ENCODE measurements at regions of chr17 and their contacts with region 1.

Region 1: DNA sequence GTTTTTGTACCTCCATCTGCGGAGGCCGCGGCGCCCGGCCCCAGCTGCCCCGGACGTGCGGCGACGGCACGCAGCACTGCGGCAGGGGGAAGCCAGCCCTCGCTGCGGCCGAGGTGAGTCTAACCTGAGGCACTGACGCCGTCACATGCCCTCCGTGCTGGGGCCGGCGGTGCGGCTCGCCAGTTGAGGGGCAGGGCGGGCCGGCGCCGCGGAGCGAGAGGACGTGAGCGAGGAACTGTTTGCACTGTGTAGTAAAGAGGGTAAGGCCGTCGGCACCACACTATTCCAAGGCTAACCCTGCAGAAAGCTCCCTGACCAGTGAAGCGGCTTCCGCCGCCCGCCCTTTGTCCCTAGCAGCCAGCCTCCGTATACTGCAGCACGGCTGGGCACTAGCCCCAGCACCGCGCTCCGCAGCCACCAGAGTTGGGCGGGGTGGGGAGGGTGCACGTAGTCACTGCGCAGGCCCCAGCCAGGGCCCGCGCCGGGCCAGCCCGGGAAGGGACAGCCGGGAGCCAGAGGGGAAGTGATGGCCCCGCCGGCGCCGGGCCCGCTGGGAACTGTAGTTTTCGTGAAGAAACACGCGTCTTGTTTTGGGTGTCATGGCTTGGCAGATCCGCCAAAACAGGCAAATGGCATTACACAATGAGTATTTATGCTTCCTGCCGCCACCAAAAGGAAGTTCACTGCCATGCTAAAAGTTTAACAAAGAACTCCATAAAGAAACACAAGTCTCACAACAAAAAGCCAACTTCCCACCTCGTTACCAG is 580 bp upstream of the KANSL1 start:
- DNase-seq: peak; percentile 89
- ATAC-seq: peak; percentile 69
- H3K4me3 Mint-ChIP-seq: peak overlapping the region; percentile 84
- H3K27ac Mint-ChIP-seq: peak overlapping the region; percentile 97
- H3K4me1 Mint-ChIP-seq: peaks cover 51% of the 10 kb centered on the region
- H3K27me3 Mint-ChIP-seq: no peaks in the 10 kb centered on the region
- CTCF ChIP-seq: no peak

Region 2: GRCh38 chr17:46002311-46002972 is 191.4 kb before region 1 on chr17:
- CTCF ChIA-PET with region 1: interaction called, 6 read pairs
- POLR2A ChIA-PET with region 1: no interaction called
- intact Hi-C with region 1: loop called (anchors 5 kb)
- DNase-seq: peak; percentile 60
- ATAC-seq: peak; percentile 95
- H3K4me3 Mint-ChIP-seq: no peak overlapping the region
- H3K27ac Mint-ChIP-seq: no peak overlapping the region
- H3K4me1 Mint-ChIP-seq: peaks cover 2% of the 10 kb centered on the region
- H3K27me3 Mint-ChIP-seq: no peaks in the 10 kb centered on the region
- CTCF ChIP-seq: peak; percentile 74

Region 3: GRCh38 chr17:46061435-46061834 is 132.4 kb before region 1 on chr17:
- CTCF ChIA-PET with region 1: no interaction called
- POLR2A ChIA-PET with region 1: no interaction called
- intact Hi-C with region 1: loop called (anchors 5 kb)
- DNase-seq: no peak
- ATAC-seq: no peak
- H3K4me3 Mint-ChIP-seq: no peak overlapping the region
- H3K27ac Mint-ChIP-seq: no peak overlapping the region
- H3K4me1 Mint-ChIP-seq: no peaks in the 10 kb centered on the region
- H3K27me3 Mint-ChIP-seq: no peaks in the 10 kb centered on the region
- CTCF ChIP-seq: no peak

Region 4: GRCh38 chr17:46139432-46140210 is 54.2 kb before region 1 on chr17:
- CTCF ChIA-PET with region 1: interaction called, 10 read pairs
- POLR2A ChIA-PET with region 1: interaction called, 8 read pairs
- intact Hi-C with region 1: loop called (anchors 1 kb)
- DNase-seq: no peak
- ATAC-seq: peak; percentile 47
- H3K4me3 Mint-ChIP-seq: peak overlapping the region; percentile 7
- H3K27ac Mint-ChIP-seq: peak overlapping the region; percentile 47
- H3K4me1 Mint-ChIP-seq: peaks cover 93% of the 10 kb centered on the region
- H3K27me3 Mint-ChIP-seq: no peaks in the 10 kb centered on the region
- CTCF ChIP-seq: no peak

Region 5: DNA sequence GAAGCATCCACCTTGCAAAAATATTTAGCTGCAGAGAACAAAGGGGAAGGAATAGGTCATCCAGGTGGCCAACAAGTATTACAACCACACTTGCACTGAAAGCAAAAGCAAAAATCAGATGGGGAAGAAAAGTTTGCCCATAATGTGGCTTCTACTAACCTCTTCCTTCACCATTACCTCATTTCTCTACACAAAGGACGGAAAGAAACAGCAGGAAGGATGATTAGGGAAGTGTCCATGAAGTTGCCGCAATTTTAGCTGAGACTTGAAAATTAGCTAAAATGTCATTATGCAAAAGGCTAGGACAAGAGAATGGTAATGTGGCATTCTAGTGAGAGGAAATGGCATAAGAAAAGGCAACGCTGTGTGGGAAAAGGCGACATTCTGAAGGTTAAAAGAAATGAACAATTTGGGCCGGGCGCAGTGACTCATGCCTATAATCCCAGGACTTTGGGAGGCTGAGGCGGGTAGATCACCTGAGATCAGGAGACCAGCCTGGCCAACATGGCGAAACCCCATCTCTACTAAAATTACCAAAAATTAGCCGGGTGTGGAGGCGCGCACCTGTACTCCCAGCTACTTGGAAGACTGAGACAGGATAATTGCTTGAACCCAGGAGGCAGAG is 14.3 kb before region 1 on chr17:
- CTCF ChIA-PET with region 1: interaction called, 10 read pairs
- POLR2A ChIA-PET with region 1: interaction called, 12 read pairs
- intact Hi-C with region 1: loop called (anchors 1 kb)
- DNase-seq: no peak
- ATAC-seq: peak; percentile 53
- H3K4me3 Mint-ChIP-seq: peak overlapping the region; percentile 61
- H3K27ac Mint-ChIP-seq: peak overlapping the region; percentile 66
- H3K4me1 Mint-ChIP-seq: peaks cover 87% of the 10 kb centered on the region
- H3K27me3 Mint-ChIP-seq: no peaks in the 10 kb centered on the region
- CTCF ChIP-seq: no peak

Region 6: DNA sequence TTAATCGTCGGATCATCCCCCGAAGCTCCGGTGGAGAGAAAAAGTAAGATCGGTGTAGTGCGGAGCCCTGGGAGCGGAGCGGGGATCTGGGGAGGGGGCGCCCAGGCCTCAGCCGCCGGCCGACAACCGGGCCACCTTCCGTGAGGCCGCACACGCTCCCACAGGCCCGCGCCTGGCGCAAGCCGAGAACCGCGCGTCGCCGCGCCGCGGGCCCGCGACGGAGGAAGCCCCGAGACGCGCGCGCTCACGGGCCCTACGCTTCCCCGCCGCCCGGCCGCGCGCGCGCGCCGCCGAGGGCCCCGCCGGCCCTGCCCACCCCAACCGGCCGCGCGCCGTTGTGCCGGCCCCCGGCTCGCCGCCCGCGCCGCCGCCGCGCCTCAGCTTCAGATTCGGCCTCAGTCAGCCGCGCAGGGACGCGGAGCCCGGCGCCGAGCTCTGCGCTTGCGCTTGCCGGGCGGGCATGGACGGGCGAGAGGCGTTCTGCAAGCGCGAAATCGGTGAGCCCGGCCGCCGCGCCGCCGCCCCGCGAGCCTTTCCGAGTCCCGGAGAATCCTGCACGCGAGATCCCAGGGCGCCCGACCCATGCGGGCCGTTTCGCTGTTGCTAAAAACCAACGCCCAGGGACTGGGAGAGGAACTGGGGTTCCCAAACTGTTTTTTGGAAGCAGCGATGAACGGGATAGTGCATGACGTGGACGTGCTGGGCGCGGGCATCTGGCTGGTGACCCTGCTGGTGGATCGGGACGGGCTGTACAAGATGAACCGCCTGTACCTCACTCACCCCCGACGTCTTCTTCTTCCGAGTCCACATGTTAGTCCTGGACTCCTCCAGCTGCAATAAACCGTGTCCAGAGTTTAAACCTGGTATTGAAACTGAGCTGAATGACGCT is 73.1 kb after region 1 on chr17:
- CTCF ChIA-PET with region 1: interaction called, 3 read pairs
- POLR2A ChIA-PET with region 1: interaction called, 7 read pairs
- intact Hi-C with region 1: loop called (anchors 2 kb)
- DNase-seq: peak; percentile 79
- ATAC-seq: peak; percentile 88
- H3K4me3 Mint-ChIP-seq: peak overlapping the region; percentile 94
- H3K27ac Mint-ChIP-seq: peak overlapping the region; percentile 90
- H3K4me1 Mint-ChIP-seq: peaks cover 20% of the 10 kb centered on the region
- H3K27me3 Mint-ChIP-seq: peaks cover 7% of the 10 kb centered on the region
- CTCF ChIP-seq: no peak

Region 7: GRCh38 chr17:48107168-48108132 is 1913.6 kb after region 1 on chr17 and contains the start of gene SNX11:
- CTCF ChIA-PET with region 1: no interaction called
- POLR2A ChIA-PET with region 1: no interaction called
- intact Hi-C with region 1: loop called (anchors 5 kb)
- DNase-seq: peak; percentile 89
- ATAC-seq: peak; percentile 71
- H3K4me3 Mint-ChIP-seq: peak within 1 kb of the TSS; percentile 99
- H3K27ac Mint-ChIP-seq: peak within 1 kb of the TSS; percentile 97
- H3K4me1 Mint-ChIP-seq: peaks cover 69% of the 10 kb centered on the region
- H3K27me3 Mint-ChIP-seq: no peaks in the 10 kb centered on the region
- CTCF ChIP-seq: no peak
- total RNA-seq, gene SNX11: 129 and 145 TPM in 2 replicates